ENCODE measurements at regions of chr1 and their contacts with region 1.

Region 1: DNA sequence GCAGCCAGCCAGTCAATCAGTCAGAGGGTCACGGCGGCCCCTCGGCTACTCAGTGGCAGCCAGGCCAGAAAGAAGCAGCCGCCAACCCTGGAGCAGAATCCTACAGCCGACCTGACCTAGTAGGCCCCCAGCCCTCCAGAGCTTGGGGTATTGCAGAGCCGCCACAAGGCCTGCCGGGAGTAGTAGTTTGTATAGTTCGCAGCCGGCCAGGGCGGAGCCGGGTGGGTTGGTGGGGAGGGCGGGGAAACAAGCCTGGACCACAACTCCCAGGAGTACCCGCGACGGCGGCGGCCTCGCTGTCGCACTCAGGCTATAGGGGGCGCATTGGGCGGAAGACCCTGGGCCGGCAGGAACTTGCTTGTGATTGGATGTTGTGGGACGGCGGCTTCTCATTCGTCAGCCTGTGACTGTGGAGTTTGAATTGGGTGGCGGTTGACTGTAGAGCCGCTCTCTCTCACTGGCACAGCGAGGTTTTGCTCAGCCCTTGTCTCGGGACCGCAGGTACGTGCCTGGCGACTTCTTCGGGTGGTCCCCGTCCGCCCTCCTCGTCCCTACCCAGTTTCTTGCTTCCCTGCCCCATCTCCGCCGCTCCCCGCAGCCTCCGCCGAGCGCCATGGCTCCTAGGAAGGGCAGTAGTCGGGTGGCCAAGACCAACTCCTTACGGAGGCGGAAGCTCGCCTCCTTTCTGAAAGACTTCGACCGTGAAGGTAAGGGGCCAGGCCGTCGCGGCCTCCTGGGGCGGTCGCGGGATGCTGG is at the start of gene CDCA8:
- DNase-seq: peak; percentile 97
- ATAC-seq: peak; percentile 94
- H3K4me3 ChIP-seq: peak within 1 kb of the TSS; percentile 77
- H3K27ac ChIP-seq: peak within 1 kb of the TSS; percentile 83
- H3K4me1 ChIP-seq: peaks cover 5% of the 10 kb centered on the region
- H3K27me3 ChIP-seq: no peaks in the 10 kb centered on the region
- CTCF ChIP-seq: peak; percentile 86
- POLR2A ChIP-seq: peak; percentile 60; the same call in 1 of the 2 replicates
- RAD21 ChIP-seq: no peak
- total RNA-seq, gene CDCA8: 5.9 and 6.1 TPM in 2 replicates

Region 2: DNA sequence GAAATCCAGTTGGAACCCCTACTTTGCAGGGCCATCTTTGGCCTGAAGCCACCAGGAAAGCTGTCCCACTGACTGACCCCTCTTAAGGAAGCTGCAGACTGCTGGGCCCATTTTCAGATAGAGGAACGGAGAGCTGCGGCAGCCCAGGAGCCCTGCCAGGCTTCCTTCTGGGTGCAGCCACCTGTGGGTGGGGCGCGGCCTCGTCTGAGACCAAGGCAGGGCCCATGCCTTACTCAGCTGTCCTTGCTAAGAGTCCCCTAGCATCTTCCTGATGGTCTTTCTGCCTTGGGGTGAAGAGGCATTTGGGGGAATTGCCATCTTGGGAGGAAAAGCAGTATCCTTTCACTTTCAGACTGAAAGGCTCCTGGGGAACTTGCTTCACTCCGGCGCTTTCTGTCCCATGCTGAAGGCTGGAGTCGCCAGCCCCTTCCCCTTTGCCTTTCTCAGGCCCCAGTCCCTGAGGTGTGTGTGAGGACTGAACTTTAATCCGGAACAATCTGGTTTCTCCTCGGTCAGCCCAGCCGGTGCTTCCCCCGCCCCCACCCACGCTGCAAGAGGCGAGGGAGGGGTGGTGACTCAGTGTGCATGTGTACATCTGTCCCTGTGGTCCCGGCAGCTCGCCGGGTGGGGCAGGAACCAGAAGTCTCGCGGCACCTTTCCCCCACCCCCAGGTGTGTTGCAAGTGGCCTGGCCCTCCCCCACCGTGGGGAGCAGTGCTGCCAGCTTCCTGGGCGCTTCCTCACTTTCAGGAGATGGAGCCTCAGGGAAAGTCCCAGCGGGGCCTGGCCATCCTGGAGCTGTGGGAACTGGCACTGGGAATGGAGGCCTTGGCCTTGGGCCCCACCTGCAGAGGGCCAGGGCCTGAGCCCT is 212.8 kb before region 1 on chr1:
- CTCF ChIA-PET with region 1: no interaction called
- POLR2A ChIA-PET with region 1: no interaction called
- dilution Hi-C with region 1: no loop called
- in situ Hi-C with region 1: no loop called
- intact Hi-C with region 1: loop called (anchors 5 kb)
- DNase-seq: peak; percentile 90
- ATAC-seq: peak; percentile 52
- H3K4me3 ChIP-seq: peak overlapping the region; percentile 4; the same call in 1 of the 2 replicates
- H3K27ac ChIP-seq: peak overlapping the region; percentile 94
- H3K4me1 ChIP-seq: peaks cover 42% of the 10 kb centered on the region
- H3K27me3 ChIP-seq: no peaks in the 10 kb centered on the region
- CTCF ChIP-seq: no peak
- POLR2A ChIP-seq: peak; percentile 47; the same call in 1 of the 2 replicates
- RAD21 ChIP-seq: 0 out of 2 replicates have a peak, but pooled peaks have one; percentile 4

Region 3: GRCh38 chr1:37764414-37764825 is 72.2 kb after region 1 on chr1:
- CTCF ChIA-PET with region 1: no interaction called
- POLR2A ChIA-PET with region 1: no interaction called
- dilution Hi-C with region 1: no loop called
- in situ Hi-C with region 1: no loop called
- intact Hi-C with region 1: no loop called
- DNase-seq: peak; percentile 37
- ATAC-seq: peak; percentile 90
- H3K4me3 ChIP-seq: no peak overlapping the region
- H3K27ac ChIP-seq: no peak overlapping the region
- H3K4me1 ChIP-seq: no peaks in the 10 kb centered on the region
- H3K27me3 ChIP-seq: peaks cover 44% of the 10 kb centered on the region
- CTCF ChIP-seq: no peak
- POLR2A ChIP-seq: no peak
- RAD21 ChIP-seq: no peak

Region 4: DNA sequence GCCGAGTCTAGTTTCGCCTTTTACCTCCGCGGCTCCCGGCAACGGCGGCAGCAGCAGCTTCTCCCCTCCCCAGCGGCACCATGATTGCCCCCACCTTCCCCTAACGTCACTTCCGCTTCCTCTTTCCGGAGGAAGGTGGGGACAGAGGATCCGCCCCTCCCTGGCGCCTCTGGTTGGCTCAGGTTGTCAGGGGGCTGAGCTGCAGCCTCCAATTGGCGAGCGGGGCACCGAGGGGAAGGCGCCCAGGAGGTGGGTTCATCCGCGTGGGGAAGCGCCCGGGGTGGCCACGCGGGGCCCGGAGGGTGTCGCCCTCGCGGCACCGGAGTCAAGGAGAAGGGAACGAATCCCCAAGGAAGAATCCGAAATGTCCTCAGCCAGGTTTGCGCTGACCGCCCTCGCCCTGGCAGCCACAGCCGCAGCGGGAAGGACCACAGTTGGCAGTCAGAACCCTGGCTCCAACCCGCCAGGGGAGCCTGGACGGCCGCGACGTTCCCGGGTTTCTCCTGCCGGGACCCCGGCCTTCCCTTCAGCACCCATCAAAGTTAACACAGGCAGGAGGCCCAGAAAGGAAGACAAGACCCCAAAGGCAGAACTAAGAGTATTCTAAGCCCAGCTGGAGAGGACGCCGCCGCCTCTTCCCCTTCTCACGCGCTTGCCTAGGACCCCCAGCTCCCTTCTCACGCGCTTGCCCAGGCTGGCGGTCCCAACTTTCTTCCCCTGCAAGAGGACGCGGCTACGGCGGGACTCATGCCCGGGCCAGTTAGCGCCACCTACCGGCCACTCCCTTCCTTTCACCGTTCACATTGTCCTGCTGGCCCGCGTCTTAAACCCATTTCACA is 167.5 kb after region 1 on chr1 and contains the start of gene MTF1:
- CTCF ChIA-PET with region 1: interaction called, 3 read pairs
- POLR2A ChIA-PET with region 1: no interaction called
- dilution Hi-C with region 1: no loop called
- in situ Hi-C with region 1: no loop called
- intact Hi-C with region 1: loop called (anchors 1 kb)
- DNase-seq: peak; percentile 95
- ATAC-seq: peak; percentile 99
- H3K4me3 ChIP-seq: peak within 1 kb of the TSS; percentile 94
- H3K27ac ChIP-seq: peak within 1 kb of the TSS; percentile 89
- H3K4me1 ChIP-seq: peaks cover 2% of the 10 kb centered on the region; the same call in 1 of the 2 replicates
- H3K27me3 ChIP-seq: no peaks in the 10 kb centered on the region
- CTCF ChIP-seq: peak; percentile 89
- POLR2A ChIP-seq: peak; percentile 70
- RAD21 ChIP-seq: peak; percentile 61
- total RNA-seq, gene MTF1: 2.2 and 2.3 TPM in 2 replicates

Measured in IMR-90 (cell line).